ENCODE measurements at regions of chr5 and their contacts with region 1.

Region 1: DNA sequence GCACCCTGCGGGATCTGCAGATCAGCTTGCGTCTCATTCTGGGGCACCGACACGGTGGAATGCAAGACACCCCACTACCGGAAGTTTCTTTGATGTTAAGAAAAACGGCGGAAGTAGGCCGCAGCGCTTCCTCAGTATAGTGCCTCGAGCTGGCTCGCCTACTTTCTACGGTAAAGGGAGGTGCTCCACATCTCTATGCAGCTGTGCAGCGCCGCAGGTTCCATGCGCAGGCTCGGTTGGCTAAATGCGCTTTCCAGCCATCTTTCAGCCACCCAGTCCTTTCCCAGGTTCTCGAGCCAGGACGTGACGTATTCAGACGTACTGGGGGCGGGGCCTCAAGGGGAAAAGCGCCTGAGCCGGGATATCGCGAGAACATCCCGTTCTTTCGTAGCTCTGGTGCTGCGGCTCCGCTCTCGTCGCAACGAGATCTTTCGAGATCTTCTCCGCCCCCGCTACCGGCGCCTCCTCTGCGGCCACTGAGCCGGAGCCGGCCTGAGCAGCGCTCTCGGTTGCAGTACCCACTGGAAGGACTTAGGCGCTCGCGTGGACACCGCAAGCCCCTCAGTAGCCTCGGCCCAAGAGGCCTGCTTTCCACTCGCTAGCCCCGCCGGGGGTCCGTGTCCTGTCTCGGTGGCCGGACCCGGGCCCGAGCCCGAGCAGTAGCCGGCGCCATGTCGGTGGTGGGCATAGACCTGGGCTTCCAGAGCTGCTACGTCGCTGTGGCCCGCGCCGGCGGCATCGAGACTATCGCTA is at the start of gene HSPA4:
- DNase-seq: peak; percentile 92 to 96
- H3K4me3 ChIP-seq: peak within 1 kb of the TSS; percentile 80 to 99 (median 97)
- H3K27ac ChIP-seq: peak within 1 kb of the TSS; percentile 99
- H3K4me1 ChIP-seq: peaks cover 0 to 8% (median 2%) of the 10 kb centered on the region in 4 experiments; a peak in 4 of 7 replicates
- H3K27me3 ChIP-seq: no peaks in the 10 kb centered on the region
- CTCF ChIP-seq: no peak
- EP300 ChIP-seq: no peak; a peak in 1 of 3 replicates
- POLR2A ChIP-seq: peak; percentile 96 to 98
- RAD21 ChIP-seq: no peak
- total RNA-seq, gene HSPA4: 411 and 445 TPM in 2 replicates

Region 2: DNA sequence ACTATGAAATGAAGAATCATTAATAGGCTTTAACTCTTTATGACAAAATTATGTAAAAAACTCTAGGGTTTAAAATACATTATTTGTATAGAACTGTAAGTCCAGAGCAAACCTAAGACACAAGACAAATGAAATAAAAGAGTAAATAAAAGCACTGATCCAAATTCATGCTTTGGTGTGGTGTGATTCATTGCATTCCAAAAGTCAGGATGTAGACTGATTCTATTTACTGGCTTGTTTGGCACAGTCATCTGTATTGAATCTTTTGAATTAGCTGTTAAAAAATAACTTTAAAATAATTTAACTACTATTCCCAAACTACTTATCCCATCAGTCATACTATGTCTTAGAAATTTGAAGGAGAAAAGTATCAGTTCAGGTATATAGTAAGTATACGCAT is 346.9 kb before region 1 on chr5:
- CTCF ChIA-PET with region 1: no interaction called
- POLR2A ChIA-PET with region 1: no interaction called
- DNase-seq: no peak
- H3K4me3 ChIP-seq: no peak overlapping the region
- H3K27ac ChIP-seq: no peak overlapping the region
- H3K4me1 ChIP-seq: no peaks in the 10 kb centered on the region
- H3K27me3 ChIP-seq: no peaks in the 10 kb centered on the region
- CTCF ChIP-seq: no peak
- EP300 ChIP-seq: no peak
- POLR2A ChIP-seq: no peak
- RAD21 ChIP-seq: no peak

Region 3: GRCh38 chr5:132866342-132867045 is 185.3 kb before region 1 on chr5 and contains the starts of genes GDF9 and UQCRQ:
- CTCF ChIA-PET with region 1: no interaction called
- POLR2A ChIA-PET with region 1: interaction called, 11 read pairs
- DNase-seq: peak; percentile 93 to 97
- H3K4me3 ChIP-seq: peak within 1 kb of the TSS; percentile 80 to 99 (median 88)
- H3K27ac ChIP-seq: peak within 1 kb of the TSS; percentile 93
- H3K4me1 ChIP-seq: peaks cover 4 to 7% (median 6%) of the 10 kb centered on the region in 4 experiments; a peak in 5 of 7 replicates
- H3K27me3 ChIP-seq: no peaks in the 10 kb centered on the region
- CTCF ChIP-seq: peak; percentile 32 to 50 (median 44)
- EP300 ChIP-seq: peak in 1 of 2 experiments; percentile 99; a peak in 2 of 3 replicates
- POLR2A ChIP-seq: peak; percentile 82 to 93; a peak in 2 of 3 replicates
- RAD21 ChIP-seq: peak; percentile 61 to 70
- total RNA-seq, gene GDF9: 0.34 TPM in 1 of 2 replicates, not detected in the other
- total RNA-seq, gene UQCRQ: 282 and 293 TPM in 2 replicates

Region 4: DNA sequence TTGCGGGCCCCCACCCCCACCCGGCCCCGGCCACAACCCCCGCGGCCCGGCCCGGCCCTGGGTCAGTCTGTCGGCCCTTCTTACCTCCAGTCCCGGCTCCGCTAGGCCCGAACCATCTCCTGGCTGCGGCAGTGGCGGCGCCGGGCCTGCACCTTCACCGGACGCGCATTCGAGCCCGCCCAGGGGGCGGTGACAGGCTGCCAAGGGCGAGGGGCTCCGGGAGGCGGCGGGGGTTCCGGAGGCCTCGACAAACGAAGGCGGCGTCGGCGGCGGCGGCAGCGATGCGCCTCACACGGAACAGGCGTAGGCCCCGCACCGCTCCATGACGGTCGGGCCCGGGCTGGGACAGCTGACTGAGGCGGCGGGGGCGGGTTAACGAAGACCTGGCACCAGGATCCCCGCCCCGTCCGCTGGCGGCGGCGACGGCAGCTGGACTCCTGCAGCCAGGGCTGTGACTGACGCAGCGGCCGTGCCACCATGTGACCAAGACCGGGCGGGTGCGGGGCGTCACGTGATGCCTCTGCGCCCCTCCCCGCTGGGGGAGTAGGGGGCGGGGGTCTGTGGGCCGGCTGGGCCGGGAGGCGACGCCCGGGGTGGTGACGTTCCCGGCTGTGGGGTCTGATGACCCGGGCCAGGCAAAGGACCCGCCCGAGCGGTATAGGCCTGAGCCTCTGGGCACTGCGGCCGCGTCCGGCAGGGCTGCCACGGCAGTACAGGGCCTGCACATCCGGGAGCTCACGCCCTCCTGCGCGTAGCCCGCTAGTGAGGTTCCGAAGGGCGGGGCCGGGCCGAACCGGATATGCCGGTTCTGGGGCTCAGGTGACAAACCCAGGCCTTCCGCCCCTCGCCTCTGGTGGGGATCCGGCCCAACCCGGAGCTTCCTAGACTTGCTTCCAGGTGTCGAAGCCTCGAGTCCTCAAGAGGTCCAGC is 88.3 kb before region 1 on chr5 and contains the start of gene AFF4:
- CTCF ChIA-PET with region 1: no interaction called
- POLR2A ChIA-PET with region 1: interaction called, 104 read pairs
- DNase-seq: peak; percentile 88 to 95
- H3K4me3 ChIP-seq: peak within 1 kb of the TSS; percentile 77 to 95 (median 86)
- H3K27ac ChIP-seq: peak within 1 kb of the TSS; percentile 89
- H3K4me1 ChIP-seq: no peaks in the 10 kb centered on the region
- H3K27me3 ChIP-seq: no peaks in the 10 kb centered on the region
- CTCF ChIP-seq: no peak
- EP300 ChIP-seq: peak; percentile 26 to 74; a peak in 2 of 3 replicates
- POLR2A ChIP-seq: peak; percentile 43 to 93
- RAD21 ChIP-seq: no peak
- total RNA-seq, gene AFF4: 61.4 and 63.7 TPM in 2 replicates

Region 5: DNA sequence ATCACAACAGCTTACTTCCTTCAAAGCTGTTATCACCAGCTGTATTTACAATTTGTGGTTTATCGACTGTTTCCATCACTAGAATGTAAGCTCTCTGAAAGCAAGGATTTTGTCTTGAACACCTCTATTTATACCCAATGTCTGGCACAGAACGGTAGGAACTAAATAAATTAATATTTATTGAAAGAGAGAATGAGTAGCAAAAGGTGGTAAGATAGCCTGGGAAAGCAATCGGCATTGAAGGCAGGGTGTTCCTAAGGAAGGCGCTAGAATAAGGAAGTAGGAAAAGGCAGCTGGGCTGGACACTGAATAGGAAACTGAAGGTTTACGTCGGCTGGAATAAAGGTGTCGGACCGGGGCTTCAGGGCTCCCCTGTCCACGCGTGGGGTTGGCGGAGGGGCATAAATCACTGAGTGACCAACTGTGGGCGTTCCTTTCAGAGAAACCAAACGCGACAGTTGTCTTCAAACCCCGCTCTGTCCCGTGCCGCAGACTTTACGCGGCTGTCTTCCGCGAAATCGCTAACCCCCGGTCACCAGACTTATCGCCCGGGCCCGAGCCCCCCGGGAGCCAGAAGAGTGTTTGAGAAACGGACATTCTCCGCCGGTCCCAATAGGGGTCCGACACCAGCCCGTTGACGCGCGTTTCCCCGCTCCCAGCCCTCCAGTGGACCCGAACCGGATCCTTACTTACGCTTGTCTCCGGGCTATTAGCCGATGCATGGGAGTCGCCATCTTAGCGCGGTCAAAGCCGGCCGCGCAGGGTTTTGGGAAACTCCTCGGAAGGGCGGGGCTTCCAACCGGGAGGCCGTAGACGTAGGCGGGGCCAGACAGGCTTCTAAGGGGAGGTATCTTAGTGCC is 25.7 kb before region 1 on chr5 and contains the start of gene ZCCHC10:
- CTCF ChIA-PET with region 1: no interaction called
- POLR2A ChIA-PET with region 1: interaction called, 34 read pairs
- DNase-seq: peak; percentile 89 to 96
- H3K4me3 ChIP-seq: peak within 1 kb of the TSS; percentile 93 to 100 (median 98)
- H3K27ac ChIP-seq: peak within 1 kb of the TSS; percentile 89
- H3K4me1 ChIP-seq: no peaks in the 10 kb centered on the region; a peak in 1 of 7 replicates
- H3K27me3 ChIP-seq: no peaks in the 10 kb centered on the region
- CTCF ChIP-seq: no peak
- EP300 ChIP-seq: no peak
- POLR2A ChIP-seq: peak; percentile 84 to 97
- RAD21 ChIP-seq: no peak
- total RNA-seq, gene ZCCHC10: 32.9 and 36.6 TPM in 2 replicates

Region 6: GRCh38 chr5:133063965-133064364 is 12.2 kb after region 1 on chr5:
- CTCF ChIA-PET with region 1: no interaction called
- POLR2A ChIA-PET with region 1: interaction called, 25 read pairs
- DNase-seq: no peak
- H3K4me3 ChIP-seq: no peak overlapping the region
- H3K27ac ChIP-seq: no peak overlapping the region
- H3K4me1 ChIP-seq: peaks cover 0 to 3% (median under 1%) of the 10 kb centered on the region in 4 experiments; a peak in 1 of 7 replicates
- H3K27me3 ChIP-seq: no peaks in the 10 kb centered on the region
- CTCF ChIP-seq: no peak
- EP300 ChIP-seq: no peak
- POLR2A ChIP-seq: no peak
- RAD21 ChIP-seq: no peak

Region 7: DNA sequence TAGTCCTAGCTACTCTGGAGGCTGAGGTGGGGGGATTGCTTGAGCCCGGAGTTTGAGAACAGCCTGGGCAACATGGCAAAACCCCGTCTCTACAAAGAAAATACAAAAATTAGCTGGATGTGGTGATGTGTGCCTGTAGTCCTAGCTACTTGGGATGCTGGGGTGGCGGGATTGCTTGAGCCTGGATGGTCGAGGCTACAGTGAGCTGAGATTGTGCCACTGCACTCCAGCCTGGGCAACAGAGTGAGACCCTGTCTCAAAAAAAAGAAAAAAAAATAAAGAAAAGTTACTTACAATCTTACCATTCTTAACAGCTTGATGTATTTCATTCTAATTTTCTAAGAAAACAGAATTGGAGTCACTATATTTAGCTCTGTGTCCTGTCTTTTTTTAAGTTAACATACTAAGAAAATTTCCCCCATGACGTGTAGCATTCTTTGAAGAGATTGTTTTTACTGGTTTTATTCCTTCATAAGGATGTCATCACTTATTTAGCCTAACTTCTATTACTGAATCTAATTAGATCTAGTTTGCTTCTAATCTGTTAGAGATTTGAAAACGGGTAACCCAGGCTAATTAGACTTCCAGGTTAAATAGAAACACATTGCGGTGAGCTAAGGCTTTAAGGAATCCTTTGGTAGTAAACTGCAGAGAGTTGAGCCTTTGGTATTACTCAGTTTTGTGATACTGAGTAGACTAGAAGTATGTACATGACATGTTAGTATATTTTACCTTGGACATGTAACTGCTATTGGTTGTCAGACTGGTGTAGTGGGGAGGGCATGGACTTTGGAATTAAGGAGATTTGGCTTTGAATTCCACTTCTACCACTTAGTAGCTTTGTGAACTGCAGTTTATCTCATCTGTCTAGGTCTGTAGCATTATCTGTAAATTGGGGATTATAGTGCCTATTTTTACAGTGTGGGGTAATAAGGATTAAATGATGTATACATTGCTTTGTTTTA is 24.1 kb after region 1 on chr5:
- CTCF ChIA-PET with region 1: no interaction called
- POLR2A ChIA-PET with region 1: interaction called, 13 read pairs
- DNase-seq: no peak
- H3K4me3 ChIP-seq: no peak overlapping the region
- H3K27ac ChIP-seq: no peak overlapping the region
- H3K4me1 ChIP-seq: peaks cover 2 to 13% (median 3%) of the 10 kb centered on the region in 4 experiments; a peak in 2 of 7 replicates
- H3K27me3 ChIP-seq: no peaks in the 10 kb centered on the region
- CTCF ChIP-seq: no peak
- EP300 ChIP-seq: no peak
- POLR2A ChIP-seq: no peak
- RAD21 ChIP-seq: no peak

Region 8: GRCh38 chr5:133203317-133204305 is 151.9 kb after region 1 on chr5:
- CTCF ChIA-PET with region 1: no interaction called
- POLR2A ChIA-PET with region 1: no interaction called
- DNase-seq: no peak
- H3K4me3 ChIP-seq: no peak overlapping the region
- H3K27ac ChIP-seq: no peak overlapping the region
- H3K4me1 ChIP-seq: no peaks in the 10 kb centered on the region
- H3K27me3 ChIP-seq: no peaks in the 10 kb centered on the region
- CTCF ChIP-seq: no peak
- EP300 ChIP-seq: no peak
- POLR2A ChIP-seq: no peak
- RAD21 ChIP-seq: no peak